ENCODE measurements at regions of chr12 and their contacts with region 1.

Region 1: DNA sequence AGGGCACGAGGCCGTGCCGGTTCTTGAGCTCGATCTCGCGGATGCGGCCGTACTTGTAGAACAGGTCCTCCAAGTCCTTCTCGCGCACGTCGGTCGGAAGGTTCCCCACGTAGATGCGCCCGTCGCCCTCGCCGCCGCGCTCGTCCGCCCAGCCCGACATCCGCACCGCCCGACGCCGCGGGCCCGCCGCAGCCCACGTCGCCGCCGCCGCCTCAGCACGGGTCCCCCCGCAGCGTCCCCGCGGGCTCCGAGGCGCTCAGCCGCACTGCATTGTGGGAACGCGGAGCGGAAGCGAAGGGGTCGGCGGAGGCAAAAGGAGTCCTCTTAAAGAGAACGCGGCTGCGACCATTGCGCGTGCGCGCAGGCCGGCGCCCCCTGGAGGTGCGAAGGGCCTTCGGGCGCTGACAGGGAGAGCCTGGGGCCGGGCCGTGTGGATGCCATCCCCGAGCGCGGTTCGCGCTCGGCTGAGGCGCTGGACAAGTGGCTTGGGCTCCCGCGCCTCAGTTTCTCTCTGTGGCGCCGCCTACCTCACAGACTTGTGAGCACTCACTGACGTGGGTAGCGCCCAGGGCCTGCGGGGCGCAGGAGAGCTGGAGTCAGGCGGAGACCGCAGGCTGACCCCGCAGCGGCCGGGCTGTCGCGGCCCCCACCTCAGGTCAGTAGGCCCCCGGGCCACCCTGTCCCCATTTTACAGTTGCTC is at the start of gene SRSF9:
- DNase-seq: peak; percentile 88 to 99 (median 96)

Region 2: DNA sequence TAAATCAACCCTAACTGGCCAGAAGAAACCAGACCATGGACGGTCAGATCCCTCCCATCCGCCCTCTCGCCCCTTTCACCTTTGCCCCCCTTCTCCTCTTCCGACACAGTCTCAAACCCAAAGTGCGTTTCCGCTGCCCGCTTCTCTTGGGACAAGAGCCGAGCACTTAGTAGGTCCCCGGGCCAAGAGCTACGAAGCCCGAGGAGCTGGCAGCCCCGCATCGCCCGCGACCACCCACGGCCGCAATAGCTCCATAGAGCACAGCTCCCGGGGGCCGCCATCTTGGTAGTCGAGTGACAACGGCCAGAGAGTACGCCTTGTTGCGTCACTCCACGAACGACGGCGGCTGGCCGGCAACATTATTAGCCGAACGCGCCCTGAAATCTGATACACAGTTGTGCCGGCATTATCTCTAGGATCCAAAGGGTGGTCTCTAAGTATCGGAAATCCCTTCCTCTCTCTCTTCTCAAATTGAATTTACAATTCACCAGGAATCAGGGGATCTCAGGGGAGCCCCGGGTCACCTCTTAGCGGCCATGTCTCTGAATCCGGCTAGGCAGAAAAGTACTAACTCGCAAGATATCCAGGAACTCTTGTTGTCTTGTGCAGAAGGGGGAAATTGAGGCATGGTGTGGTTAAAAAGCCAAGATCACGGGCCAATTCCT is 59.4 kb after region 1 on chr12 and contains the start of gene COQ5:
- intact Hi-C with region 1: loop called (anchors 5 kb)
- DNase-seq: peak; percentile 91 to 98 (median 95)

Region 3: GRCh38 chr12:120677765-120678473 is 208.3 kb after region 1 on chr12:
- intact Hi-C with region 1: no loop called
- DNase-seq: no peak